ENCODE measurements at regions of chr20 and their contacts with region 1.

Region 1: DNA sequence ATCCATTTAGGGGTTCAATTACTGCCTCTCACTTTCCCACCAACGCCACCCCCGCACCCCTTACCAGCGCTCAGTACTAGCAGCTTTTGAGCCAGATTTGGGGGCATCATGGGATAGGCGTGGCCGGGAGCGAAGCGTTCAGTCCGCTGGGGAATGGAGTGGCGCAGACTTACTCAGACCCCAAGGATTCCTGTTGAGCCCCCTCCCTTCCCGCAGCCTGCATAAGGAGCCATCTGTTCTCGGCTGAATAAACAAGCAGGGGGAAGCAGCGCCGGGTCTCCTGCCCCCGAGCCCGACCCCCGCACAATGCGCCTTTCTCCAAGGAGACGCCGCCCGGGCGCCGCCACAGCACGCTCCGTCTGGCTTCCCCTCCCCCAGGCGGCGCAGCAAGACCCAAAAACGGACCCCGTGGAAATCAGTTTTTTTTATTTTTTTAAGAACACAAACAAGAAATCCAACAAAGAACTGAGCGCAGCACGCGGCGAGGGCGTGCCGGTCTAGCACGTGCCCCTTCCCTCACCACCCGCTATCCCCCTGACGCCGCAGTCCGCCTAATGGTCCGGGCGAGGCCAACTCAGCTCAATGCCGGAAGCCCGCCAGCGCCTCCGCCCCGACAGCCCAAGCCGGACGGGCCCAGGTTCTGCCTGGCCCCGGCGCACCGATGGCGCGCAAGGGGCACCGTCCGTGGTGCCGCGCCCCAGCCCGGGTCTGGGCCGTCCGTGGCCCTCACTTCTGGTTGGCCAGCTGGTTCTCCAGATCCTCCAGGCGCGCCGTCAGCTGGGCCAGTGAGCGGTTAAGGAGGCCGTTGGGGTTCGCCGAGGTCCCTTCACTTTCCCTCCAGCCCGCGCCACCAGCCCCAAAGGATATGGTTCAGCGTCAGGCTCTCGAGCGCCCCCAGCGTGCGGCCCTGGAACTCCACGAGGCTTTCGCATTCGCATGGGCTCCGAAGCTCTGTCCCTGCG is 13.3 kb upstream of the RBPJL start:
- DNase-seq: peak; percentile 90
- ATAC-seq: peak; percentile 78
- H3K4me3 ChIP-seq: peak overlapping the region; percentile 70
- H3K27ac ChIP-seq: no peak overlapping the region
- H3K4me1 ChIP-seq: peaks cover 6% of the 10 kb centered on the region
- H3K27me3 ChIP-seq: no peaks in the 10 kb centered on the region
- CTCF ChIP-seq: peak; percentile 90

Region 2: DNA sequence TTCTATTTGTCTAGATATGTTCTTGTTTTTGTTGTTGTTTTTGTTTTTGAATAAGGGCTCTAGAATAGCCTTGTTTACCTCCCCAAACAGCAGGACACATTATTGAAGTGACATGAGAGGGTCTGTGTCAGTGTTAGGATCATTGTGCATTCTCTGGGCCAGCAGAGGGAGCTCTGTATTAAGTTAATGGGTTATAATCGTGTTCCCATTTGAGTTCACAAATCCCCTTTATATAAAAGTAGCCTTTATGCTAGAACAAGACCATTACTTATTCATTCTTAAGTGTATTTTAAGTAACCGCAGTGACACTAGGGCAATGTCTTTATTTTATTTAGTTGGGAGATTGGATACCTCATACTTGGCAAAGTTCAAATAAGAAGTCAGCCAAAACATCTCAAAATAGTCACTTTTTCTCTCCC is 282.2 kb before region 1 on chr20:
- CTCF ChIA-PET with region 1: interaction called, 3 read pairs
- POLR2A ChIA-PET with region 1: no interaction called
- intact Hi-C with region 1: loop called (anchors 2 kb)
- DNase-seq: peak; percentile 84
- ATAC-seq: peak; percentile 88
- H3K4me3 ChIP-seq: no peak overlapping the region
- H3K27ac ChIP-seq: peak overlapping the region; percentile 48
- H3K4me1 ChIP-seq: peaks cover 24% of the 10 kb centered on the region
- H3K27me3 ChIP-seq: no peaks in the 10 kb centered on the region
- CTCF ChIP-seq: peak; percentile 98

Region 3: GRCh38 chr20:45138561-45139300 is 154.6 kb before region 1 on chr20:
- CTCF ChIA-PET with region 1: interaction called, 14 read pairs
- POLR2A ChIA-PET with region 1: no interaction called
- intact Hi-C with region 1: loop called (anchors 1 kb)
- DNase-seq: peak; percentile 86
- ATAC-seq: peak; percentile 96
- H3K4me3 ChIP-seq: peak overlapping the region; percentile 20; the same call in 1 of the 2 replicates
- H3K27ac ChIP-seq: peak overlapping the region; percentile 27
- H3K4me1 ChIP-seq: peaks cover 19% of the 10 kb centered on the region
- H3K27me3 ChIP-seq: no peaks in the 10 kb centered on the region
- CTCF ChIP-seq: peak; percentile 99

Region 4: DNA sequence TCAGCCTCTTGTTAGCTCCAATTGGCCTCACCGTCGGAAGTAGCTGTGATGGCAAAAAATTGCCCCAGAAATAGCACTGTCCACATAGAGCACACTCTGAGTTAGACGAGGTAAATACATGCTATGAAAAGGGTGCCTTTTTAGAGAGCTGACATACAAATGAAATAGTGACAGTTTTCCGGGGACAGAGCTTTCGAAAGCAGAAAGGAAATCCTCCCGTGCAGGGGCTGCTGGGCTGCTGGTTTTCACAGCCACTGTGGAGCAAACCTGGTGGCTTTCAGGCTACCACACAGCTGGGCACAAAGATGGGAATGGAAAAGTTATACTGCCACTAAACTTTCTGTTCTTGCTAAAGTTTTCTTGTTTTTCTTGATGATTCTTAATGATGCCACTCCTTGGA is 47.2 kb before region 1 on chr20:
- CTCF ChIA-PET with region 1: no interaction called
- POLR2A ChIA-PET with region 1: no interaction called
- intact Hi-C with region 1: loop called (anchors 2 kb)
- DNase-seq: no peak
- ATAC-seq: no peak
- H3K4me3 ChIP-seq: no peak overlapping the region
- H3K27ac ChIP-seq: no peak overlapping the region
- H3K4me1 ChIP-seq: no peaks in the 10 kb centered on the region
- H3K27me3 ChIP-seq: no peaks in the 10 kb centered on the region
- CTCF ChIP-seq: no peak